Prostate gland (tissue), 2 donors: ENCODE measurements at regions of chr2 and their contacts with region 1.

Region 1: DNA sequence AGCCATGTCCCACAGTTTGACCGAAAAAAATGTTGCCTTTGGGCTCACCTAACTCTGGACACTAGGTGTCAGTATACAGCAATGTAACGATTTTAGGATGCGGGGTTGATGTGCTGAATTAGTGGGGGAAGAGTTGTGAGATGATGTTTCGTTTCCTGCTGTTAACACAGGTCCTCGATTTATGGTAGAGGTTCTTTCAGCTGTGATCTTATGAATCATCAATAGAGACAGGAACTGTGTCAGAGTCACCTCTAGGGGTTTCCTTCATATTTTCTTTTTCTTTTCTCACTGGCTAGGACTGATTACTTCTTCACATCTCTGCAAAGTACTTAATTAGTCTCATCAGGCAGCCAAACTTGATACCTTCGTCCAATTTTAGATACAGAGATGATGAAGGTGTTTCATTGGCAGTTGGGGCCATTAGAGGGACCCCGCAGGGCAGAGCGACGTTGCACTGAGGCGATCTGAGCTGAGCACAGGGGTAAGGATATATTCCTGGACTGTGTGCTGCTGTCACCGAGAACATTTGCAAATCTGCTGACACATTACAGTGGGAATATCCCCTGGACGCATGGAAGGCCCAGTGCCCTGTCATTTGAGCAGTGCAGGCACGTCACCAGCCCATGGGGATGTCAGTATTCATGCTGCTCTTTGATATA is 10.2 kb upstream of the MMADHC start:
- DNase-seq: peak; percentile 51
- H3K4me3 ChIP-seq: peak overlapping the region in 1 of 2 donors; percentile 5
- H3K27ac ChIP-seq: no peak overlapping the region
- H3K4me1 ChIP-seq: no peaks in the 10 kb centered on the region
- H3K27me3 ChIP-seq: no peaks in the 10 kb centered on the region
- CTCF ChIP-seq: peak; percentile 60 to 88 (median 75)
- POLR2A ChIP-seq: no peak

Region 2: GRCh38 chr2:148813603-148814065 is 784.2 kb before region 1 on chr2:
- intact Hi-C with region 1: no loop called
- DNase-seq: no peak
- H3K4me3 ChIP-seq: no peak overlapping the region
- H3K27ac ChIP-seq: no peak overlapping the region
- H3K4me1 ChIP-seq: no peaks in the 10 kb centered on the region
- H3K27me3 ChIP-seq: no peaks in the 10 kb centered on the region
- CTCF ChIP-seq: no peak
- POLR2A ChIP-seq: no peak

Region 3: DNA sequence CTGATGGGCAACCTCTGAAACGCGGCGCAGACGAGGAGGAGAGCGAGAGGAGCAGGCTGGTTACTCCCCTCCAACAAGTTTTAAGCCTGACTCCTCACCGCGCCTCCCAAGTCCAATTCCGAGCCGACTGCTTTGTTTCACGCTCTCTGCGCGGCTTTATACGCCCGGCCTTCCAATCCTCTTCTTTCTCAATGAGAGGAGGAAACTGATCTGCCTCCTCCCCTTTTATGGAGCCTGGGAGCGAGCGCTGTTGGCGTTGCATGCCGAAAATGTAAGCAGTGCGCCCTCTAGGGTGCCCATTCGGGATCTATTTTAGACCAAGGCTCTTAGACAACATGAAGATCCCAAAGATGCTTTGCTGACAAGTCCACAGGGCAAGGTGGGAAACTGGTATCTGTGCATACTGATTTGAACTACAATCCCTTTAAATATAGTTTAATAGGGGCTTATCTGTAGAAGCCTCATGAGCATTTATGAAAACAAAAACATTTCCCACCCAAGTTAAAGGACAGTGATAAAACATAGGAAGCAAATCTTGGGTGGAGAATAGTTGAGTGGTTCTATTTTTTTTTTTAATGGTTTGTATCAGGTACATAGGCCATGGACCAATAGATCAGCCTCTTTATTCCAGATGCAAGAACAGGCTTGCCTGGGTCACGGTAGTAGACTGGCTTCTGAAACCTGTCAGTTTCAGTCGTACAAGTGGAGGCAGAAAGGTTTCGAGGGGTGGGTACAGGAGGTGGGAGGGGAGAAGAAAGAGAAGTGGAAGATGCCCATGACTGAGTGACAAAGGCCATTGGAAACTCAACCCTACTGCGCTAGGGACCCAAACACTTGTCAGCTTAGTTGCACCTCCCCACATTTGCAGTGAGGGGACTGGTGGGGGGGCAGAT is 890.0 kb after region 1 on chr2 and contains the start of gene RND3:
- intact Hi-C with region 1: loop called (anchors 1 kb)
- DNase-seq: peak; percentile 99
- H3K4me3 ChIP-seq: peak within 1 kb of the TSS; percentile 53 to 61
- H3K27ac ChIP-seq: peak within 1 kb of the TSS; percentile 86 to 89
- H3K4me1 ChIP-seq: no peaks in the 10 kb centered on the region
- H3K27me3 ChIP-seq: no peaks in the 10 kb centered on the region
- CTCF ChIP-seq: peak; percentile 80 to 92 (median 90)
- POLR2A ChIP-seq: peak; percentile 90
- total RNA-seq, gene RND3: 26.2 to 54.7 TPM

Region 4: DNA sequence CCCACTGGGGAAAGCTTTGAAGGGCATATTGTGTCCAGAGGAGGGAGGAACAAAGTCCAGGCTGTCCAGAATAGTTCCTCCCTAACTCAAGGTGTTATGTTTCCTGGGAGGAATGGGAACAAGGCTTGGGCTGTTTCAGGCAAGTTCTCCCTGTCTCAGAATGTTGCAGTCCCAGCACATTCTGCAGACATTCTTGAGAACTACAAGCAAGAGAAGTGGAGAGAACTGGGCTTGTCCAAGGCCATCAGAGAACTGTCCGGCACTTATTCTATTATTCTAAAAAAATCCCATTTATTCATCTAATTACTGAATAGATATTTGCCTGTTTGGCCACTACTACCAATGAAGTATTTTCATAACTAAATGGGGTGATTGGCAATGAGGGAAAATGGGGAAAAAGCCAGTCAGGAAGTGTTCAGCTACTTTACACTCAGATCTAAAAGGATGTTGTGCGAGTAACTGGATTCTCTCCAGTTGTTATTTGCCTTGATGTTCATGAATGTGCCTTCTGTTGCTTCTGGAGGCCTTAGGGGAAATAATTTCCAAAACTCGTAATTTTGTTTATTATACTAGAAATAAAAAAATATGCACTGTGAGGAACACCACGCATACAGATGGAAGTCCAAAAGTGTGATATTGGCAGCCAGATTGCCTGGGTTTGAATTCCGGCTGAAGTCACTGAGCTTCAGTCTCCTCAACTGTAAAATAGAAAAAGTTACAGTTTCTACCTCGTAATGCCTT is 1189.7 kb after region 1 on chr2:
- intact Hi-C with region 1: loop called (anchors 10 kb)
- DNase-seq: no peak
- H3K4me3 ChIP-seq: no peak overlapping the region
- H3K27ac ChIP-seq: no peak overlapping the region
- H3K4me1 ChIP-seq: no peaks in the 10 kb centered on the region
- H3K27me3 ChIP-seq: no peaks in the 10 kb centered on the region
- CTCF ChIP-seq: no peak
- POLR2A ChIP-seq: no peak

Region 5: DNA sequence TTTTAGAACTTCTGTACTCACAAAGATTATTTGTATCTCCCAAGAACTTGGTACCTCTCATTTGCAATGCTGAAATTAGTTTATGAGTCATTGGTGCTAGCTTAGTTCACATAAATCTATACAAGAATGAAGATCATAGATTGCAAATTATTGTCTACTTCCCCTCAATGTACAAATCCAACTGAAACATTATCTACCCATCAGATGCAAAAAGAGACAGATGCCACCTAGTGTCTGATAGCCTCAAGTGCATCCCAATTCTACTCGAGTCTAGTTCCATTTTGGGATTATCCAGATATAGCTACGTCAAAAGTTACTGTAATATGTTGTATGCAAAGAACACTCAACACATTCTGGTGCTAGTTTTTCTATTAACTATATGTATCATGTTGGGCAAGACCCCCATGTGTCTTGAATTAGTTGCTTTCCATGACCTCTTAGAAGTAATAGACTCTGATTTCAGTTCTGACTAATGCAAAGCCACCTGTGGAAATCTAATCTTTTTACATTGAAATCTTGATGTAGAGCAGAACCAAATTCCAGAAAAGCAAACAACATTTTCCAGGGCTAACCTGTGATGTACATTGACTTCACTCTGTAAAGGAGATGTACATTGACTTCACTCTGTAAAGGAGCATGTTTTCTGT is 1453.9 kb after region 1 on chr2:
- intact Hi-C with region 1: loop called (anchors 5 kb)
- DNase-seq: peak; percentile 22
- H3K4me3 ChIP-seq: no peak overlapping the region
- H3K27ac ChIP-seq: no peak overlapping the region
- H3K4me1 ChIP-seq: no peaks in the 10 kb centered on the region
- H3K27me3 ChIP-seq: no peaks in the 10 kb centered on the region
- CTCF ChIP-seq: peak; percentile 20 to 77 (median 68)
- POLR2A ChIP-seq: no peak